Body of pancreas (tissue), 4 donors: ENCODE measurements at regions of chr19 and their contacts with region 1.

Region 1: DNA sequence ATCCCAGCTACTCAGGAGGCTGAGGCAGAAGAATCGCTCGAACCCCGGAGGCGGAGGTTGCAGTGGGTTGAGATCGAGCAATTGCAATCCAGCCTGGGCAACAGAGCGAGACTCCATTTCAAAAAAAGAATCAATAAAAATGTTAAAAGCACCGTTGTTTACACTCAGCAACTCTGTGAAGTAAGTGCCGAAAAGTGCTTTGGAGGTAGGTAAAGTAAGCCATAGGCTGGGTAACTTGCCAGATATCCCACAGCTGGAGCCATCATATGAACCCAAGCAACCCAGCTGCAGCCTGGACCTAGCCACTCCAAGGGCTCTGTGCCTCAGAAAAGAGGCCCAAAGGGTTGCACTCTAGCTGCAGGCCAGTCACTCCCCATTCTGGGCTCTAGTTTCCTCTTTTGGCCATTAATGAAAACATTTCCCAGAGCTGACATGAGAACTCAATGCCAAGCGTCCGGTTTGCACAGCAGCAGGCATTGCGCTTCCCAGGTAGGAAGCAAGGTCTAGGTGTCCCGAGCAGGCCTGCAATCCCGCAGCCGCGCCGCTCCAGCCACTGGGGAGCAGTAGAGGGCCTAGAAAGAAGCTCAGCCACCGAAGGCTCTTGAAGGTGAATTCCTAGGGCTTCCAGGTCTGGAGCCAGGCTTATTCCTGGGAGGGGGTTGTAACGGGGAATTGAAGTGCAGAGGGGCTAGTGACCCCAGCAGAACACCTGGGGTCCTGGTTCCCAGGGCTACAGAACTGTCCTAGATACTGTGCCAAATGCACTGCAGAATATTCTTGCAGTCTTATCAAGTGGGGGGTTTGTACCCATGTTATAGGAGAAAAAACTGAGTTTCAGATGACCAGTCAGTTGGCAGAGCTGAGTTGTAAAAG is 4.1 kb upstream of the CD79A start:
- DNase-seq: peak; percentile 83 to 87 (median 86)
- ATAC-seq: peak; percentile 92
- H3K4me3 ChIP-seq: no peak overlapping the region
- H3K27ac ChIP-seq: peak overlapping the region in 1 of 4 donors; percentile 8
- H3K4me1 ChIP-seq: peaks cover 12% of the 10 kb centered on the region
- H3K27me3 ChIP-seq: no peaks in the 10 kb centered on the region
- CTCF ChIP-seq: peak; percentile 52 to 85 (median 77)
- POLR2A ChIP-seq: peak in 1 of 3 donors; percentile 19

Region 2: DNA sequence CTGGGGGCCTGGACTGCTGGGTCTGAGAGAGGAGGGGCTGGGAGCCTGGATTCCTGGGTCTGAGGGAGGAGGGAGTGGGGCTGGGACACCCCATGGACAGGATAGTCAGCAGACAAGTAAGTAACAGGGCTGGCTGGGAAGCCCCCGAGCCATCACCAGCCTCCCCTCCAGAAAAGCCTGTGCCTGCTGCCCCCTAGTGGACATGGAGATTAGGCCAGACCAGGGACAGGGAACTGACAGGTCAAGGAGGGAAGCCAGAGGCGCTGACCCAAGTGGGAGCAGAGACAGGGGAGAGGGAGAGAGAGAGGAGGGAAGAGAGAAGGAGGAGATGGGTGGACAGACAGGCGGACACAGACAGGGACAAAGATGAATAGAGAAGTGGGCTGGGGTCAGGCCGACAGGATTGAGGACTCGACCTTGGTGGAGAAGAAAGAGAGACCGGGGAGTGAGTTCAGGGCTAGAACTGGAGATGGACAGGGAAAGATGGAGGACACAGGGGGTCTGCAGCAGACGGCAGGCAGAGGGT is 61.9 kb after region 1 on chr19:
- intact Hi-C with region 1: loop called (anchors 5 kb)
- DNase-seq: peak; percentile 66 to 71 (median 68)
- ATAC-seq: peak; percentile 77
- H3K4me3 ChIP-seq: no peak overlapping the region
- H3K27ac ChIP-seq: no peak overlapping the region
- H3K4me1 ChIP-seq: peaks cover 10% of the 10 kb centered on the region
- H3K27me3 ChIP-seq: peaks cover 0 to 4% of the 10 kb centered on the region in 2 donors
- CTCF ChIP-seq: peak; percentile 67 to 87 (median 79)
- POLR2A ChIP-seq: no peak

Region 3: DNA sequence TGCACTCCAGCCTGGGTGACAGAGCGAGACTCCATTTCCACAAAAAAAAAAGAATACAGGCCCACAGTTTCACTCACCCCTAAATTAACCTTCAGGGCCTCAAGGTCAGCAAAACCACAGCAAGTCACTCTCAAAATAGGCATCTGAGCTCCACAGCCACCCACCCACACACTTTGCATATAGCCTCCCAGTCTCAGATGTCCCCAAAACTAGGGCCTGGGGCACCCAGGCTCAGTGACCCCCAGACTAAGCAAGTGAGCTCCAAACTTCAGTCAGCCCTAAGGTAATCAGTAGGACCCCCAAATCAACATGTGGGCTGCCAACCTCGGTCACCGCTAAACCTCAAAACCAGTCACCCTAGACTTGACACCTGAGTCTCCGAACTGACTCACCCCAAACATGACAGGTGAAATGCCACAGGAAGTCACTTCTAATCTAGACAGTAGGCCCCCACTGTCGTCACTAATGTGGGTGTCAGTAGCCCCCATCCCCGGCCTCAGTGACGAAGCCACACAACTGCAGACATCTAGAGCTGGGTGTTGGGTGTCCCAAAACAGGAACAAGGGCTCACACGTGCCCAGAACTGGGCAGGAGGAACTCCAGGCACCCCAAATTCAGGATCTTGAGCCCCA is 72.2 kb after region 1 on chr19:
- intact Hi-C with region 1: loop called (anchors 5 kb)
- DNase-seq: peak in 2 of 4 donors; percentile 27 to 53
- ATAC-seq: no peak
- H3K4me3 ChIP-seq: no peak overlapping the region
- H3K27ac ChIP-seq: no peak overlapping the region
- H3K4me1 ChIP-seq: peaks cover 9% of the 10 kb centered on the region
- H3K27me3 ChIP-seq: peaks cover 0 to 10% of the 10 kb centered on the region in 2 donors
- CTCF ChIP-seq: no peak
- POLR2A ChIP-seq: no peak

Region 4: DNA sequence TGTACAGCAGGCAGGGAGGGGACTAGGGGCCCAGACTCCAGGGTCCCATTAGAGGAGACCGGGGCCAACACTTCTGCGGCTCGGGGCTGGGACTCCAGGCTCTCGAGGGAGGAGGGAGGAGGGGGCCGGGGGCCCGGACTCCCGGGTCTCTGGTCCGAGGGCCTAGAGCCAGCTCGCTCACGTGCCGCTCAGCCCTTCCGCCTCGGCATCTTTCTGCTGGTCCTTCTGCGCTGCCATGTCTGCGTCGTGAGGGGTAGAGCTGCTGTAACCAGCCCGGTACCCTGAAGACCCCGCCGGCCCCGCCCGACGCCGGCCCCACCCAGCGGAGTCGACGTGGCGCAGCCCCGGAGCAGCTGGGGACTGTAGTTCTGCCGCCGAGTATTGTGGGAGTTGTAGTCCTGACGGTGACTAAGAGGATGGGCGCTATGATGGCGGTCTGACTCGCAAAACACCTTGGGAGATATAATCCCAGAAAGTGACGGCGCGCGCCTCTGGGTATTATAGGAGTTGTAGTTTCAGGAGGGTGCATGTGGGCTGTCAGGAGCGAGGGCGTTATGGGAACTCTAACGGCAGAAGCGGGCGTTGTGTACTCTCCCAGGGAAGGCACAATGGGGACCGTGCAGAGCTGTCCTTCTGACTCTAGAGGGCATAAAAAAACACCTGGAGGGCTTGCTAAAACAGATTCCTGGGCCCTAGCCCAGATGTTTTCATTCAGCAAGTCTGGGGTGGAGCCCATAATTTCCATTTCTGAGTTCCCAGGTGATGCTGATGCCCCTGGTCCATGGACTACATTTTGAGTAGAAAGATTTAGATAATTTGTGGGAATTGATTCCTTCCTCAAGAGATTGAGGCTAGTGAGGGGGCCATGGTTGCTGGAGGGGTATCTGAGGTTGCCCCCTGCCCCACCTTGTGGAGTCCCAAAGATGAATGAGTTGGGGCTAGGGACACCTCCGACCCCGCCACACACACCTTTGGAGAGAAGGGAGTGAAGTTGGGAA is 86.3 kb after region 1 on chr19 and contains the start of gene RABAC1:
- intact Hi-C with region 1: loop called (anchors 5 kb)
- DNase-seq: peak; percentile 86 to 91 (median 90)
- ATAC-seq: peak; percentile 81
- H3K4me3 ChIP-seq: peak within 1 kb of the TSS; percentile 54 to 94
- H3K27ac ChIP-seq: peak within 1 kb of the TSS; percentile 83 to 90 (median 86)
- H3K4me1 ChIP-seq: peaks cover 15% of the 10 kb centered on the region
- H3K27me3 ChIP-seq: no peaks in the 10 kb centered on the region
- CTCF ChIP-seq: no peak
- POLR2A ChIP-seq: no peak
- total RNA-seq, gene RABAC1: 87.3 to 88.5 TPM

Region 5: GRCh38 chr19:42370626-42371170 is 497.7 kb after region 1 on chr19:
- intact Hi-C with region 1: no loop called
- DNase-seq: no peak
- ATAC-seq: no peak
- H3K4me3 ChIP-seq: no peak overlapping the region
- H3K27ac ChIP-seq: no peak overlapping the region
- H3K4me1 ChIP-seq: no peaks in the 10 kb centered on the region
- H3K27me3 ChIP-seq: no peaks in the 10 kb centered on the region
- CTCF ChIP-seq: no peak
- POLR2A ChIP-seq: no peak